Vagina (tissue), 2 donors: ENCODE measurements at regions of chr15 and their contacts with region 1.

Region 1: DNA sequence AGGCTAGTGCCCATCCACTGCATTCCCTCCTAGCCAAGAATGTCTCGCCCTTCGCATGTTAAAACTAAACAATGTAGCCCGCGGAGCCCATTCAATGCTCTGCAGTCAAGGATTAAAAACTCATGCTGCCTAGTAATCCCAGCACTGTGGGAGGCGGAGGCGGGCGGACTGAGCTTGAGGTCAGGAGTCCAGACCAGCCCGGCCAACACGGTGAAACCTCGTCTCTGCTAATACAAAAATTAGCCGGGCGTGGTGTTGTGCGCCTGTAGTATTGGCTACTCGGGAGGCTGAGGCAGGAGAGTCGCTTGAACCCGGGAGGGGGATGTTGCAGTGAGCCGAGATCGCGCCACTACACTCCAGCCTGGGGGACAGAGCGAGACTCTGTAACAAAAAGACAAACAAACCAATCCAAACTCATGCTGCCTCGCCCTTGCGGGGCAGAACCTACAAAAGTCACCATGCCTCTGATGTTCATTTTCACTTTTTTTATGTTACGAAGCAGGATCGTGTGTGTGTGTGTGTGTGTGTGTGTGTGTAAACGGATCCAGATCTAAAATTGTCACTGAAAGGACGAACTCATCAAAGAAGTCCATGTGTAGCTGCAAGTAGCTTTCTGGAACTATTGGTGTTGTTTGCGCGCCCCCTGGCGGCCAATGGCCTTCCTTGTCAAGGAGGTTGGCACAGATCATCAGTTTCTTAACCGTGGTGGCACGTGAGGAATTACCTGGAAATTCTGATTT is 54.8 kb upstream of the SPESP1 start:
- DNase-seq: no peak
- H3K4me3 ChIP-seq: peak overlapping the region; percentile 22 to 40
- H3K27ac ChIP-seq: no peak overlapping the region
- H3K4me1 ChIP-seq: no peaks in the 10 kb centered on the region
- H3K27me3 ChIP-seq: no peaks in the 10 kb centered on the region
- CTCF ChIP-seq: peak; percentile 90 to 96 (median 94)
- POLR2A ChIP-seq: no peak

Region 2: DNA sequence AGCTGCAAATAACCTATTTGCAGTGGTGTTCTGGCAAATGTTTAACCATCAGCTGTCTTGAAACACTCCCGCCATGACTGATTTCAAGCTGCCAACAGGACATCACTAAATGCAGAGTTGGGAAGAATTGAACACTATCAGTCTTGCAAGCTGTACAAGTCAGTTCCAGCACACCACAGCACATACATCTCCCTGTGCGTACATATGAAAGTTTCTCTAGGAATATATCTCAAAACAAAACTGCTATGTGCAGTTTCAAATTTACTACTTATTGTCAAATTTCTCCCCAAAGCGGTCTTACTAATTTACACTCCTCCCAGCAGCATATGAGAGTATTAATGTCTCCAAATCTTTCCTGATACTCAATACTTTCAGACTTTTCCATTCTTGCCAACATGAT is 327.2 kb before region 1 on chr15:
- intact Hi-C with region 1: loop called (anchors 5 kb)
- DNase-seq: no peak
- H3K4me3 ChIP-seq: no peak overlapping the region
- H3K27ac ChIP-seq: no peak overlapping the region
- H3K4me1 ChIP-seq: peaks cover 7% of the 10 kb centered on the region
- H3K27me3 ChIP-seq: no peaks in the 10 kb centered on the region
- CTCF ChIP-seq: no peak
- POLR2A ChIP-seq: no peak

Region 3: GRCh38 chr15:68730471-68730919 is 145.1 kb before region 1 on chr15:
- intact Hi-C with region 1: loop called (anchors 5 kb)
- DNase-seq: no peak
- H3K4me3 ChIP-seq: no peak overlapping the region
- H3K27ac ChIP-seq: peak overlapping the region; percentile 33
- H3K4me1 ChIP-seq: peaks cover 18% of the 10 kb centered on the region
- H3K27me3 ChIP-seq: no peaks in the 10 kb centered on the region
- CTCF ChIP-seq: peak; percentile 8 to 48 (median 47)
- POLR2A ChIP-seq: no peak

Region 4: GRCh38 chr15:68820295-68821189 is 55.0 kb before region 1 on chr15 and contains the start of gene ANP32A:
- intact Hi-C with region 1: loop called (anchors 10 kb)
- DNase-seq: peak in 1 of 2 donors; percentile 97
- H3K4me3 ChIP-seq: peak within 1 kb of the TSS; percentile 66 to 99
- H3K27ac ChIP-seq: peak within 1 kb of the TSS; percentile 98
- H3K4me1 ChIP-seq: peaks cover 27% of the 10 kb centered on the region
- H3K27me3 ChIP-seq: no peaks in the 10 kb centered on the region
- CTCF ChIP-seq: no peak
- POLR2A ChIP-seq: peak in 1 of 2 donors; percentile 81
- total RNA-seq, gene ANP32A: 55.2 TPM